Naive thymus-derived CD4-positive, alpha-beta T cell (primary cell): ENCODE measurements at regions of chr10 and their contacts with region 1.

Region 1: GRCh38 chr10:97686962-97687784 is at the start of gene AVPI1:
- DNase-seq: peak; percentile 94 to 97 (median 96)
- ATAC-seq: peak; percentile 97
- H3K4me3 ChIP-seq: peak within 1 kb of the TSS; percentile 80
- H3K4me3 Mint-ChIP-seq: peak within 1 kb of the TSS; percentile 85 to 90 (median 88)
- H3K27ac ChIP-seq: peak within 1 kb of the TSS; percentile 81
- H3K27ac Mint-ChIP-seq: peak within 1 kb of the TSS; percentile 28 to 96 (median 91)
- H3K4me1 ChIP-seq: peaks cover 5 to 25% of the 10 kb centered on the region in 2 donors
- H3K4me1 Mint-ChIP-seq: peaks cover 9 to 30% (median 19%) of the 10 kb centered on the region in 7 donors
- H3K27me3 ChIP-seq: no peaks in the 10 kb centered on the region
- H3K27me3 Mint-ChIP-seq: peaks cover 0 to 2% (median 0%) of the 10 kb centered on the region in 5 donors
- total RNA-seq, gene AVPI1: 0.65 to 10.6 (median 2.5) TPM

Region 2: GRCh38 chr10:97292097-97292862 is 394.9 kb before region 1 on chr10 and contains the start of gene ARHGAP19:
- CTCF ChIA-PET with region 1: no interaction called
- POLR2A ChIA-PET with region 1: no interaction called
- intact Hi-C with region 1: loop called in 1 of 2 experiments (anchors 1 kb)
- DNase-seq: peak; percentile 65 to 97 (median 95)
- ATAC-seq: peak; percentile 100
- H3K4me3 ChIP-seq: peak within 1 kb of the TSS; percentile 88
- H3K4me3 Mint-ChIP-seq: peak within 1 kb of the TSS; percentile 83 to 97 (median 95)
- H3K27ac ChIP-seq: peak within 1 kb of the TSS; percentile 83
- H3K27ac Mint-ChIP-seq: peak within 1 kb of the TSS; percentile 32 to 98 (median 92)
- H3K4me1 ChIP-seq: peaks cover 4 to 8% of the 10 kb centered on the region in 2 donors
- H3K4me1 Mint-ChIP-seq: peaks cover 17 to 26% (median 24%) of the 10 kb centered on the region in 7 donors
- H3K27me3 ChIP-seq: no peaks in the 10 kb centered on the region
- H3K27me3 Mint-ChIP-seq: peaks cover 0 to 4% (median 0%) of the 10 kb centered on the region in 5 donors
- total RNA-seq, gene ARHGAP19: 12.8 to 40.1 (median 16.1) TPM

Region 3: DNA sequence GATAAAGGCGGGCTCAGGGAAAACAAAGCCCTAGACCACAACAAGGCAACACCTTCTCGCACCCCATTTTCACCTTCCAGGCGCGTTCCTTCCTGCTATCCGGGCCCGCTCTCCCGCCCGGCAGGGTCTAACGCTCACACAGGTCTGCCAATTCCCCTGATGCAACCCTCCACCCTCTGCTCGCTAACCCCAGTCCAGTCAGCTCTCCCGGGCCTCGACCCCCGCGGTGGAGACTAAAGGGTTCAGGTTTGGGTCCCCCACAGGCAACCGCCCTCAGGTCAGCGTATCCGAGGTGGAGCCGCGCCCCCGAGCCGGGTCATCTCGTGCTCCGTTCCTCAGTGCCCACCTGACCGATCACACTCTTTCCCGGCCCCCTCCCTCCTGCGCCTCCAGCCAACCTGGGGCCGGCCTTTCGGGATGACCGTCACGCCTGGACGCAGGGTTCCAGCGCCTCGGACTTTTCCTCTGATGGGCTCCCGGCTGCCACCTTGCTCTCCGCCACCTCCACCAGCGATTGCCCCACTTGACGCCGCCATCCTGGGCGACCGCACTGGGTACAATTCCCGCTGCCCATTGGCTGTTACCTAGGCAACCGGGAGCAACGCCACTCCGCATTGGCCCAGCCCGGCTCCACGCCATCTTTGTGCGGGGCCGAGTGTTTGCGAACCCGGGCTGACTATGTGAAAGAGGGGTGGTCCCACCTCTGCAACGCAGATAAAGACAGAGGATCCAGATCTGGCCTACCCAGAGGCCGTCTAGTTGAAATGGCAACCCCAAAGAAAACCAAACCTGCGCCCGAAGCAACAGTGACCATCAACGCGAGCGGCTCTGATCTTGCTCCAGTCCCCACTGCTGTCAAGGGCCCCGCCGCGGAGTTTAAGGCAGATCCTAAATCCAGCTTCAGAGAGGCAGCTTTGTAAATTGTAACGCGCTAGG is 54.0 kb before region 1 on chr10 and contains the start of gene MORN4:
- CTCF ChIA-PET with region 1: no interaction called
- POLR2A ChIA-PET with region 1: interaction called, 5 read pairs
- intact Hi-C with region 1: loop called in 1 of 2 experiments (anchors 2 kb)
- DNase-seq: peak; percentile 82 to 94 (median 92)
- ATAC-seq: peak; percentile 100
- H3K4me3 ChIP-seq: peak within 1 kb of the TSS; percentile 91
- H3K4me3 Mint-ChIP-seq: peak within 1 kb of the TSS; percentile 92 to 100 (median 98)
- H3K27ac ChIP-seq: peak within 1 kb of the TSS; percentile 50
- H3K27ac Mint-ChIP-seq: peak within 1 kb of the TSS; percentile 82 to 96 (median 92)
- H3K4me1 ChIP-seq: peaks cover 0 to 10% of the 10 kb centered on the region in 2 donors
- H3K4me1 Mint-ChIP-seq: peaks cover 10 to 18% (median 16%) of the 10 kb centered on the region in 7 donors
- H3K27me3 ChIP-seq: no peaks in the 10 kb centered on the region
- H3K27me3 Mint-ChIP-seq: no peaks in the 10 kb centered on the region
- total RNA-seq, gene MORN4: 0.78 to 4.1 (median 1.5) TPM

Region 4: GRCh38 chr10:97701438-97702069 is 14.4 kb after region 1 on chr10:
- CTCF ChIA-PET with region 1: interaction called, 13 read pairs
- POLR2A ChIA-PET with region 1: interaction called, 6 read pairs
- intact Hi-C with region 1: loop called (anchors 1 kb)
- DNase-seq: peak in 8 of 9 donors; percentile 35 to 66 (median 56)
- ATAC-seq: peak; percentile 97
- H3K4me3 ChIP-seq: no peak overlapping the region
- H3K4me3 Mint-ChIP-seq: no peak overlapping the region
- H3K27ac ChIP-seq: no peak overlapping the region
- H3K27ac Mint-ChIP-seq: no peak overlapping the region
- H3K4me1 ChIP-seq: no peaks in the 10 kb centered on the region
- H3K4me1 Mint-ChIP-seq: peaks cover 0 to 6% (median 0%) of the 10 kb centered on the region in 7 donors
- H3K27me3 ChIP-seq: no peaks in the 10 kb centered on the region
- H3K27me3 Mint-ChIP-seq: peaks cover 0 to 19% (median 6%) of the 10 kb centered on the region in 5 donors

Region 5: GRCh38 chr10:97731346-97732051 is 44.3 kb after region 1 on chr10:
- CTCF ChIA-PET with region 1: interaction called, 19 read pairs
- POLR2A ChIA-PET with region 1: interaction called, 44 read pairs
- intact Hi-C with region 1: no loop called
- DNase-seq: peak in 8 of 9 donors; percentile 32 to 58 (median 50)
- ATAC-seq: peak; percentile 83
- H3K4me3 ChIP-seq: no peak overlapping the region
- H3K4me3 Mint-ChIP-seq: no peak overlapping the region
- H3K27ac ChIP-seq: no peak overlapping the region
- H3K27ac Mint-ChIP-seq: no peak overlapping the region
- H3K4me1 ChIP-seq: peaks cover 0 to 3% of the 10 kb centered on the region in 2 donors
- H3K4me1 Mint-ChIP-seq: peaks cover 7 to 12% (median 10%) of the 10 kb centered on the region in 7 donors
- H3K27me3 ChIP-seq: no peaks in the 10 kb centered on the region
- H3K27me3 Mint-ChIP-seq: peaks cover 0 to 8% (median 3%) of the 10 kb centered on the region in 5 donors

Region 6: GRCh38 chr10:98748298-98748697 is 1061.1 kb after region 1 on chr10:
- CTCF ChIA-PET with region 1: no interaction called
- POLR2A ChIA-PET with region 1: no interaction called
- intact Hi-C with region 1: no loop called
- DNase-seq: no peak
- ATAC-seq: no peak
- H3K4me3 ChIP-seq: no peak overlapping the region
- H3K4me3 Mint-ChIP-seq: no peak overlapping the region
- H3K27ac ChIP-seq: no peak overlapping the region
- H3K27ac Mint-ChIP-seq: no peak overlapping the region
- H3K4me1 ChIP-seq: no peaks in the 10 kb centered on the region
- H3K4me1 Mint-ChIP-seq: no peaks in the 10 kb centered on the region
- H3K27me3 ChIP-seq: no peaks in the 10 kb centered on the region
- H3K27me3 Mint-ChIP-seq: peaks cover 0 to 10% (median 0%) of the 10 kb centered on the region in 5 donors